ENCODE measurements at regions of chr2 and their contacts with region 1.

Region 1: DNA sequence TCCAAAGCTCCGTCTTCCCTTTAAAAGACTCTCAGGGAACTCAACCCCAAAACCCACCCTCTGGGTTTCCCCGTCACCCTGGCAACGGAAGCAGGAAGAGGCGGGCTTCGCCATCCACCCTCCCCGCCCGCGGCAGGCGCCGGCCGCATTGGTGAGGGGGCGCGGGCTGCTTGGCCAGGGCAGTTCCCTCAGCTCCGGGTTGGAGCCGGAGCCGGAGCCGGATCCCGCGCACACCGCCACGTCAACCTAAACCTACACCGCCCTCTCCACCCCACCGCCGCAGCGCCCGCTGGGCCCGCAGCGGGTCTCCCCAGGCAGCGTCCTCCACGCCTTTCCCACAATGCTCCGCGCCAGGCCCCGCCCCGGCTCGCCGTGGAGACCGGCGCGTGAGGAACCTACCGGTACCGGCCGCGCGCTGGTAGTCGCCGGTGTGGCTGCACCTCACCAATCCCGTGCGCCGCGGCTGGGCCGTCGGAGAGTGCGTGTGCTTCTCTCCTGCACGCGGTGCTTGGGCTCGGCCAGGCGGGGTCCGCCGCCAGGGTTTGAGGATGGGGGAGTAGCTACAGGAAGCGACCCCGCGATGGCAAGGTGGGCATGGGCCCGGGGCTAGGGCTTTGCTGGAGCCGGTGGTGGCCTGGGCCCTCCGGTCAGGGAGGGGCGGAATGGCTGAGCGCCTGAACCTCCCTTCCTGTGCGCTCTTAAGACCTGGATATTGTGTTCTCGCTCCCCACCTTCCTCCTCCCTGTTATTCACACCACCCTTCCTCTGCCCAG is at the start of gene DNAJC10:
- DNase-seq: peak; percentile 89
- H3K4me3 Mint-ChIP-seq: no peak within 1 kb of the TSS
- H3K27ac Mint-ChIP-seq: no peak within 1 kb of the TSS
- H3K4me1 Mint-ChIP-seq: peaks cover 10% of the 10 kb centered on the region
- H3K27me3 Mint-ChIP-seq: no peaks in the 10 kb centered on the region
- total RNA-seq, gene DNAJC10: 40.8 to 41.5 TPM

Region 2: DNA sequence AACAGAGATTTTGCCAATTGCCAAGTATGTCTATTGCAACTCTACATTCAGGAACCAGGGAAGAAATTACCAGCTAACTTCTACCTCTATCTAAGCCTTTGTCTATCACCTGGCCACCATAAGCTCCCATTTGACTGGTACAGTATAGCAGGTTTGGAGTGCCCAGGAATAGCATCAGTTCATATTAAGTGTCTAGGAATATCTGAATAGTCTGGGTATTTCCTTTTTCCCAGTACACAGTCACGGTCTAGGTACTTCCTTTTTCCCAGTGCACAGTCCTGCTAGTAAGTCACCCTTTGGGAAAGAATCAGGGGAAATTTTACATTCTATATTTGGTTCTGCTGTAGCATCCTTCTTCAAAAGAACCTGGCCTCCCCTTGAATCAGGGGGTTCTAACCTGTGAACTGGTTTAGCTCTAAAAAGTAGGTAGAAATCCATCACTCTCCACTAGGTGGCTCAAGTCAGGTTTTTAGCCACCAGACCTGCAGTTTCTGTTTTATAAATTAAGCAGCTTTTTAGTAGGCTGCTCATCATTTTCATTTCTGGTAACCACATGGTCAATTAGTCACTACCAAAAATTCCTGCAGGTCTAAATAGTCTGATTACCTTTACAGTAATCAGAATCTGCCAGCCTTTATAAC is 49.3 kb before region 1 on chr2:
- CTCF ChIA-PET with region 1: interaction called, 4 read pairs
- intact Hi-C with region 1: loop called (anchors 1 kb)
- DNase-seq: peak; percentile 19
- H3K4me3 Mint-ChIP-seq: no peak overlapping the region
- H3K27ac Mint-ChIP-seq: no peak overlapping the region
- H3K4me1 Mint-ChIP-seq: peaks cover 8% of the 10 kb centered on the region
- H3K27me3 Mint-ChIP-seq: no peaks in the 10 kb centered on the region

Region 3: DNA sequence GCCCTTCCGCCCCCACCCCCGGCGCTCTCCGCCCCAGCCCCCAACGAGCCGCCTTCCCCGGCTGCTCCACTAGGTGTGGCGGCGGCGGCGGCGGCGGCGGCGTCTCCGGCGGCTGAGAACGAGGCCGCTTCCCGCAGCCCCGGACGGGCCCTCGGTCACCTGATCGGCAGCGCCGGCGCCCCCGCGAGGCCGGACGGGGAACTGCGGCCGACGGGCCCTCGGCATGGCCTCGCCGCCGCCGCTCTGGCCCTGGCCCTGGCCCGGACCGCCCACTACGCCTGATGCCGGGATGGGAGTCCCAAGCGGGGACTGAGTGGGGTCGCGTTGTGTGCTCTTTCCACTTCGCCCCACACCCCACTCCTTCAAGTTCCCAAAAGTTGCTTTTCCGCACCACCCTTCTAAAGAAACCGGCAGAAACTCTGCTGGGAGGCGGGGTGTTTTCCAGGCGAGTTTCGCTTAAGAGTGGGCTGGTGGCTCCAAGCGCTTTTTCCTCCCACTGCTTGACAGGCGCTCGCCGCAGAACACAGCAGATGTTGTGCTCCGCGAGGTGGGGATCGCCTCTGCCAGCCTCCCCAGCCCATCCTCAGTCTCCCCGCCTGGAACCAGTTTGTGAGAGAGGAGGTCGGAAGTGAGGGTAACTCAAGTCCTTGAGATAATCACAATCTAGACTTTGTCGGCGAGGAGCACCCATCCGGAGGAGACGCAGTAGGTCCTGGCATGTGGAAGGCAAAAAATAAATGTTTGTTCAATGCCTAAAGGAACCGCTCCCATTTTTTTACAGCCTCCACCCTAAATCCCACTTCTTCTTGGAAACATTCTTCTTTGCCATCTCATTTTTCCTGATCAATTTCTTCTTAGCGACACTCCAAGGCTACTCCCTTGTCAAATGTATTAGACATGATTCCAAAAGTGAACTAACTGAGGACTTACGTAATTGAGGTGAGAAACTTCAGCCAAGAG is 322.5 kb after region 1 on chr2 and contains the start of gene NCKAP1:
- CTCF ChIA-PET with region 1: no interaction called
- intact Hi-C with region 1: loop called (anchors 1 kb)
- DNase-seq: peak; percentile 87
- H3K4me3 Mint-ChIP-seq: peak within 1 kb of the TSS; percentile 78
- H3K27ac Mint-ChIP-seq: no peak within 1 kb of the TSS
- H3K4me1 Mint-ChIP-seq: peaks cover 22% of the 10 kb centered on the region
- H3K27me3 Mint-ChIP-seq: peaks cover 46% of the 10 kb centered on the region
- total RNA-seq, gene NCKAP1: 10.6 to 11.9 TPM

Region 4: DNA sequence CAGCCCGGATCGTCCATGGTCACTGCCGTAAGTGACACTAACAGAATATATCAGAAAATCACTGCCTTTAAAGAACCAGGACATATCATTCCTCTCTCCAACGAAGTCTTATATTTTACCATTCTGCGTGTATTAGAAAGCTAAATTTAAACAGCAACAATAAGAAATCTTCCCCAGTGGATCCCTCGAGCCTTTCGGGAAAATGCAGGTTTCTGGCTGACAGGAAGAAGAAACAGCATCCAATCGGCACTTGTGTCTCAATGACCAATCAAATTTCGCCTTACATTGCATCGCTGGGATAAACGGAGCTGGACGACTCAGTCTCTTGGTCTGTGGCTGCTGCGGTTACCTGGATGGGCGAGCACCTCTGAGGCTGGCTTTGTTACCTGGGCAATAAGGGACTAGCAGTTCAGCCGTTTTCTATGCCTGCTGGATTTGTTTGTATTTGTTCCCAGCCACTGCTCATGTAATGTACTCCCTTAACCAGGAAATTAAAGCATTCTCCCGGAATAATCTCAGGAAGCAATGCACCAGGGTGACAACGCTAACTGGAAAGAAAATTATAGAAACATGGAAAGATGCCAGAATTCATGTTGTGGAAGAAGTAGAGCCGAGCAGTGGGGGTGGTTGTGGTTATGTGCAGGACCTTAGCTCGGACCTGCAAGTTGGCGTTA is 362.5 kb after region 1 on chr2 and contains the start of gene DUSP19:
- CTCF ChIA-PET with region 1: no interaction called
- intact Hi-C with region 1: loop called (anchors 1 kb)
- DNase-seq: peak; percentile 94
- H3K4me3 Mint-ChIP-seq: peak within 1 kb of the TSS; percentile 93
- H3K27ac Mint-ChIP-seq: peak within 1 kb of the TSS; percentile 50
- H3K4me1 Mint-ChIP-seq: peaks cover 6% of the 10 kb centered on the region
- H3K27me3 Mint-ChIP-seq: no peaks in the 10 kb centered on the region
- total RNA-seq, gene DUSP19: 5.0 to 6.0 TPM

Region 5: GRCh38 chr2:183124222-183124956 is 408.3 kb after region 1 on chr2 and contains the start of gene NUP35:
- CTCF ChIA-PET with region 1: no interaction called
- intact Hi-C with region 1: loop called (anchors 1 kb)
- DNase-seq: peak; percentile 90
- H3K4me3 Mint-ChIP-seq: peak within 1 kb of the TSS; percentile 93
- H3K27ac Mint-ChIP-seq: peak within 1 kb of the TSS; percentile 95
- H3K4me1 Mint-ChIP-seq: peaks cover 32% of the 10 kb centered on the region
- H3K27me3 Mint-ChIP-seq: peaks cover 6% of the 10 kb centered on the region
- total RNA-seq, gene NUP35: 25.6 to 28.8 TPM

Measured in activated naive CD4-positive, alpha-beta T cell treated with anti-CD3 and anti-CD28 coated beads for 36 hours (primary cell).